A549 (cell line): ENCODE measurements at regions of chr5 and their contacts with region 1.

Region 1: GRCh38 chr5:172973127-172973916 is 10.2 kb upstream of the ATP6V0E1 start:
- DNase-seq: no peak
- ATAC-seq: no peak
- H3K4me3 ChIP-seq: no peak overlapping the region
- H3K27ac ChIP-seq: no peak overlapping the region
- H3K4me1 ChIP-seq: no peaks in the 10 kb centered on the region
- CTCF ChIP-seq: no peak
- EP300 ChIP-seq: no peak
- POLR2A ChIP-seq: no peak
- RAD21 ChIP-seq: no peak

Region 2: GRCh38 chr5:172943283-172943841 is 30.0 kb before region 1 on chr5:
- CTCF ChIA-PET with region 1: no interaction called
- POLR2A ChIA-PET with region 1: no interaction called
- DNase-seq: no peak
- ATAC-seq: peak in 1 of 2 experiments; percentile 9; a peak in 1 of 6 replicates
- H3K4me3 ChIP-seq: no peak overlapping the region
- H3K27ac ChIP-seq: peak overlapping the region; percentile 16 to 70; a peak in 4 of 6 replicates
- H3K4me1 ChIP-seq: peaks cover 19% of the 10 kb centered on the region
- CTCF ChIP-seq: no peak
- EP300 ChIP-seq: no peak
- POLR2A ChIP-seq: no peak
- RAD21 ChIP-seq: no peak

Region 3: DNA sequence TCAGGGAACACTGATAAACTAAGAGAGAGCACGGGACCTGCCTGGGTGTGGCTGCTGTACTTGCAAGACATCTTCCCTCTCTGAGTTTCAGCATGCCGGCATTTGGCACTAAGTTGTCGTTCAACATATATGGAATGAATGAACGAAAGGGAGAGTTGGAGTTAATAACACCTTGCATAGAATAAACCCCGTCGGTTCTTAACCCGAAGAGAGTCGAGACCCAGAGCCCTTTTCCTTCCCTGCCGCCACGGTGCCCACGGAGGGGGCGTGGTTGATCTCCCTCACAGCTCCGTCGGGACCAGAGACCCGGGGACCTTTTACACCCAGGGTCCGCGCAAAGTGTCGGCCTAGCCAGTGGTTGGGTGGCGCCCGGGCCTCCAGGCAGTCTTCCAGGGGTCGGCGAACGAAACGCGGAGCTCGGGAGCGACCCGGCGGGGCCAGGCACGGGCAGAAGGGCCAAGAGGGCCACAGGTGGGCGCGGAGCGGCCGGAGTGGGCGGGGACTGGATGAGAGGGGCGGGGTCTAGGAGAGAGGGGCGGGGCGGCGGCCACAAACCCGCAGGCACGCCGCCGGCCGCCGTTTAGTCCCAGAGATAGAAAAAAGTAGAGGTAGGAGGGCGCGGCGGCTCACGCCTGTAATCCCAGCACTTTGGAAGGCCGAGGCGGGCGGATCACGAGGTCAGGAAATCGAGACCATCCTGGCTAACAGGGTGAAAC is 14.8 kb before region 1 on chr5:
- CTCF ChIA-PET with region 1: interaction called, 24 read pairs
- POLR2A ChIA-PET with region 1: interaction called, 3 read pairs
- DNase-seq: peak; percentile 66 to 84
- ATAC-seq: peak; percentile 77 to 78
- H3K4me3 ChIP-seq: peak overlapping the region; percentile 65
- H3K27ac ChIP-seq: peak overlapping the region; percentile 94 to 95
- H3K4me1 ChIP-seq: peaks cover 57% of the 10 kb centered on the region
- CTCF ChIP-seq: no peak
- EP300 ChIP-seq: no peak
- POLR2A ChIP-seq: no peak
- RAD21 ChIP-seq: no peak; a peak in 1 of 5 replicates